ENCODE measurements at regions of chr4 and their contacts with region 1.

Region 1: DNA sequence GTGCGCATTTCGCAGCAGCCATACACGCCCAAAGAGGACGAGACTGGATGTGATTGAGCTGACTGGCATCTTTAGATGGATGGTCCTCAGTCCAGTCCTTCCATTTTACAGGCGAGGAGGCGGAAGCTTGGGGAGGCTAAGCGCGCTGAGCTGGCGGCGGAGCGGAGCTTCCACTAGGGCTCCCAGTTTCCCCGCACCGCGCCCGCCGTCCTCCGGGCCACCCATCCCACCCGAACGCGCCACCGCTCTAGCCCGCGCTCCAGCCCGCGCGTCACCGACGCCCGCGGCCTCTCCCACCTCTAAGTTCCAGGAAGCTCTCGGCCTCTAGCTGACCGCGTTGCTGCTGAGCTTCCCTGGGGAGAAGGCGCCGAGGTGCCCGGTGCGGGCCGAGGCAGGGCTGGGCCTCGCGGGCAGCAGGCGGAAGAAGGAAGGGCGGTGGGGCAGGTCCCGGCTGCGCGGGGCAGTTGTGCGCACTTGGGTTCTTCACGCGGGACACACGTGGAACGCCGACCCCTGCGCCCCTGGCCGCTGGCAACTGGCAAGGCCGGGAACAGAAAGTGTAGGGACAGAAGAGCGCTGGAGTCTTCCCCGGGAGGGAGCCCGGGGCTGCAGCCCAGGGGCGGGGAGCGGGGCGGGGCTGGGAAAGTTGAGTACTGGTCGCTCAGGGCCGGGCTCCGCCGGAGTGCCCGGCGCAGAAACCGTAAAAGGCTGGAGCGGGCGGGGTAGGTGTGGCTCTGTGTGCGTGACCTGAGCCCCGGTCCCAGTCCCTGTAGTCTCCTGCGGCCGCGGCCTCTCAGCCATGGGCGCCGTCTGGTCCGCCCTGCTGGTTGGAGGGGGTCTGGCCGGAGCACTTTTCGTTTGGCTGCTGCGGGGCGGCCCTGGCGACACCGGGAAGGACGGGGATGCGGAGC is at the start of gene STBD1:
- DNase-seq: peak; percentile 78
- H3K4me3 ChIP-seq: peak within 1 kb of the TSS; percentile 73 to 76
- H3K27ac ChIP-seq: peak within 1 kb of the TSS; percentile 90
- H3K4me1 ChIP-seq: peaks cover 5% of the 10 kb centered on the region
- H3K27me3 ChIP-seq: no peaks in the 10 kb centered on the region
- CTCF ChIP-seq: peak in 1 of 4 experiments; percentile 10
- POLR2A ChIP-seq: peak; percentile 64
- total RNA-seq, gene STBD1: 2.4 to 7.1 TPM

Region 2: DNA sequence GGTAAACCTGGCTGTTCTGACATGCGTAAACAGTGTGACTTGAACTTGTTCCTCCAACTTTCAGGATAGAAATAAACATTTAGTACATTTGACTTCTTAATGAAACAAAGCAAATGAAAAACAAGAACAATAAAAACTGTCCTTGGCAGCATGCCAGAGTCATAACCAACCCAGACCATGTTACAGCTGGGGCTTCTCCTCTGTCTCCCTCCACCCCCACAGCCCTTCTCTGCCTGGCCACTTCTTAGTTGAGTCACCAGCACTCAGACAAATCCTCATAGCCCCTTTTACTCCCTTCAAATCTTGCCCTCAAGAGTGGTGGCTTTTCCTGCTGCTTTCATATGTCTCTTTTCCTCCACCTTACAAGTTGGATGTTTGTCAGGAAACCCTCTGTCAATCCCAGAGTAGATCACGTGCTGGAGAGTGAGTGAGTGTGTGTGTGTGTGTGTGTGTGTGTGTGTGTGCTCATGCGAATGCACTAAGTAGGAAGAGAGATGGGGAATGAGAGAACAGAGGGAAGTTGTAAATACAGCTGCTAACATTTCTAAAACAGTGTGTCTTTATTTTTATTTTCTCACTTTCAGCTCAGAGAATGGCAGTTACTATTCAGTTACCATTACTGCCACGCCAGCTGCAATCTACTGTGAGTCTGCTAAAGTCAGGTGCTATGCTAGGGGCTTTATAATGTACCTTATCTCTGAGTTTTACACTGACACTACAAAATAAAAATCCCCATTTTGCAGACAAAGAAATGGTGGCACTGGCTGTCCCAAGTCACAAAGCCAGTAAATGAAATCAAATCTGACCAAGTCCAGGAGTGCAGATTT is 107.6 kb before region 1 on chr4:
- intact Hi-C with region 1: loop called (anchors 5 kb)
- DNase-seq: peak; percentile 90
- H3K4me3 ChIP-seq: no peak overlapping the region
- H3K27ac ChIP-seq: peak overlapping the region; percentile 83 to 87
- H3K4me1 ChIP-seq: peaks cover 53% of the 10 kb centered on the region
- H3K27me3 ChIP-seq: no peaks in the 10 kb centered on the region
- CTCF ChIP-seq: no peak
- POLR2A ChIP-seq: no peak

Region 3: DNA sequence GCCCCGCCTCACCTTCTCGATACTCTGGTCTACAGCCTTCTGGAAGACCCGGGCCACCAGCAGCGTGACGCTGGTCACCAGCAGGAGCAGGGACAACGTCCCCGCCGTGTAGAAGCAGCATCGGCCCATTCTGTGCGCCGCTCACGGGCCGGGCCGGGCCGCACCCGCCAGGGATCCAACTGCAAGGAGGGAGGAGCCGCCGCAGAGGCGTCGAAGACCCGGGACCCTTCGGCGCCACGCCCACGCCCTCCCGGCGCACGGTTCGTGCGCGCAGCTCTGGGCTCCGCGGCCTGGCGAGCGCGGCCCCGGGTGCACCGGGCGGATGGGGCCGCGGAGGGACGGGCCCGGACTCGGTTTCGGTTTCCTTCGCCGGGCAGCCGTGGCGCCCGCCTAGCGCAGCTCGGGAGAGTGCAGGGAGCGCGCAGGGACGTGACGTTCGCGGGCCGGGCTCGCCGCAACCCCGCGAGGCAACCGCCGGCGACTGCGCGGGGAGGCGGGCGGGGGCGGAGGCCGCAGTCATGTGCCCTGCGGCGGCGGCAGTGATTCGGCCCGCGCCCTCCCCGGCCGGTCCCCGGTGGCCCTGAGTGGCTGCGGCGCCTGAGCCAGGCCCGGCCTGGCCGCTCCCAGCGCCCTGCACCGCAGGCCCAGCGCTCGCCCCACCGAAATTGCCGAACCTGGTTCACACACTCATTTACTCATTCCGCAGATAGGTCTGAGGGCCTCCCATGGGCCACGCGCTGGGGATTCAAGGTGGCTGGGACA is 92.6 kb before region 1 on chr4 and contains the start of gene SCARB2:
- intact Hi-C with region 1: loop called (anchors 2 kb)
- DNase-seq: peak; percentile 86
- H3K4me3 ChIP-seq: peak within 1 kb of the TSS; percentile 83 to 87
- H3K27ac ChIP-seq: peak within 1 kb of the TSS; percentile 96
- H3K4me1 ChIP-seq: peaks cover 20% of the 10 kb centered on the region
- H3K27me3 ChIP-seq: no peaks in the 10 kb centered on the region
- CTCF ChIP-seq: peak in 2 of 4 experiments; percentile 19 to 20
- POLR2A ChIP-seq: peak; percentile 87
- total RNA-seq, gene SCARB2: 169 to 392 TPM

Region 4: GRCh38 chr4:76251441-76252270 is 54.6 kb before region 1 on chr4 and contains the start of gene FAM47E:
- intact Hi-C with region 1: loop called (anchors 2 kb)
- DNase-seq: peak; percentile 72
- H3K4me3 ChIP-seq: peak within 1 kb of the TSS; percentile 57 to 66
- H3K27ac ChIP-seq: peak within 1 kb of the TSS; percentile 48 to 58
- H3K4me1 ChIP-seq: no peaks in the 10 kb centered on the region
- H3K27me3 ChIP-seq: no peaks in the 10 kb centered on the region
- CTCF ChIP-seq: peak in 3 of 4 experiments; percentile 32 to 62 (median 34)
- POLR2A ChIP-seq: peak; percentile 37
- total RNA-seq, gene FAM47E: 12.3 to 15.1 TPM

Region 5: DNA sequence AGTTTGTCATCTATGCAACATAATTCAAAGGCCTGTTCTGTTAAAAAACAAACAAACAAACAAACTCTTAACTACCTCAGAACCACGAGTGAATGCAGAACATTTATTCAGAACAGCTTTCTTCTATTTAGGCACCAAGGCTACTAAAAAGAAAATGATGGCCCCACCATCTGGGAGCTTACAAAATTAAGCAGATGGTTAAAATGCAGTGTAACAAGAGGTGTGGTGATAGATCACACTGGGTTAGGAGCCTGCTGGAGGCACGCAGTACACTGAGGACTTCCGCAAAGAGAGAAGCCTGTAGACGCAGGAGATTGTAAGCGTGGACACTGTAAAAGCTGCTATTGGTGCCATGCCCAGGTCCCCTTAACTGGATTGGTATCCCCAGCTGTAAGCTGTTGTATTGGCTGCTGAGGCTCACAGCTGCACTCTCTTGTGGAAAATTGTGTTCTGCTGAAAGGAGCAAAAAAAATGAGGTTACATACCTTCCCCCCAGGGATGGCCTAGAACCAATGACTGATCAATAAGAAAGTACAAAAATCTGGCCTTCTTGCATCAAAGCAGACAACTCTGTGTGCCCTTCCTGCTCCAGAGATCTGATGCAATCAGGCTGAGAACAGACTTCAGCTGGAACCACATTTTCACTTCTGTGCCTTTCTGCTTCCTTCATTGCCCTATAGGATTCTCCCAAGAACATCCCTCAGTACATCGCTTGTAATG is 188.8 kb after region 1 on chr4:
- intact Hi-C with region 1: loop called (anchors 5 kb)
- DNase-seq: no peak
- H3K4me3 ChIP-seq: no peak overlapping the region
- H3K27ac ChIP-seq: no peak overlapping the region
- H3K4me1 ChIP-seq: no peaks in the 10 kb centered on the region
- H3K27me3 ChIP-seq: no peaks in the 10 kb centered on the region
- CTCF ChIP-seq: no peak
- POLR2A ChIP-seq: no peak

Region 6: DNA sequence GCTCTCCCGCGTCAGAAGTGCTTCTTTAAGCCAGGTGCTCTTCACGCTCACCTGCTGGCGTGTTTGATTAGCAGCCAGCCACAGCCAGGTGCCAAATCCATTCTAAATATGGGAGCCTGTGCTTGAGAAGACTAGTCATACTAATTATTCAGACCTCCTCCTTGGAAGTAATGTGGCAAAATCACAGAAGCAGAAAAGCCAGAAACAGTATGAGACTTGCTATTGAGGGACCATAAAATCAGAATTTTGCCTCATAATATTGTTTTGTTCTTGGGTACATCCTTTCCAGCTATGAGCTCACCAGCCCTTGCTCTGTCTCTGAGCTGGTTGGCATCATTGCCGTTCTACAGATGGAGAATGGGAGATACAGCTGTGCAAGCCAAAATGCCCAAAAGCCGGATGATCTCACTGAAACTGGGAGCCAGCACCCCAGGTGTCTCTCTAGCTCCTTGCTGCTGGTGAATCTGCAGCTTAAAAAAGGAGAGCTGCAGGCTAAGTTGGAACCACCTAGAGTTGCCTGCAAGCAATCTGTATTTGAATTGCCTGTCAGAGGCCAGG is 334.2 kb after region 1 on chr4:
- intact Hi-C with region 1: no loop called
- DNase-seq: no peak
- H3K4me3 ChIP-seq: no peak overlapping the region
- H3K27ac ChIP-seq: no peak overlapping the region
- H3K4me1 ChIP-seq: no peaks in the 10 kb centered on the region
- H3K27me3 ChIP-seq: no peaks in the 10 kb centered on the region
- CTCF ChIP-seq: no peak
- POLR2A ChIP-seq: no peak